Heart right ventricle (tissue), 16 donors: ENCODE measurements at regions of chr5 and their contacts with region 1.

Region 1: DNA sequence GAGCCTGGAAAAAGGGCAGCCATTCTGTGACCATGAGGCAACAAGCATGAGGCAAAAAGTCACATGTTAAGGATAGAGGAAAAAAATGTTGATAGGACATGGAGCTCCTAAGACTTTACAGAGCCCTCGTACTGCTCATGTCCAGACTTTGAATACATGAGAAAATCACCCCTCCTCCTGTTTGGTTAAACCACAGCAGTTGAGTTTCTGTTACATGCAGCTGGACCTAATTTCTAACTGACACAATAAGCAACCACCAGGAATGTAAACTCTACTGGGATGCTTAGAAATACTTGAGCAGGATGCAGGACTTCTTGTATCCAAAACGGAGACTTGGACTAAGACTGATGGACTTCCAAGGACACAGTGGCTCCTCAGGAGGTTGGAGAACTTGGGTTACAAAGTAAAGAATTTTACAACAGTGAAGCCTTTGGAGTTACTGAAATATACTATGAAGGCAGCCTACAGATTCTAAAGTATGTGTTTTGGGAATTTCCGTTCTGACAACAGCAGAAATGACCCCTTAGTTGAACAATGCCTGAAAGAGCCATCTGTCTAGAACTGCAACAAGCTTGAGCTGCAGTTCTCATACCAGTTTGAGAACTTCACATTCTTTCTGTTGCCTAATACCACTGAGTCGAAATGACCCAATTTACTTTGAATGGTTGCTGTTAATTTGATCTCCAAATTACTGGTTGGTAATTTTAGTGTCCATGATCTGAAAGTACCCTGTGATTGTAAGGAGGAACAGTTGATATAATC is 268.9 kb downstream of the PIK3R1 start:
- DNase-seq: no peak
- ATAC-seq: no peak
- H3K4me3 ChIP-seq: no peak overlapping the region
- H3K27ac ChIP-seq: no peak overlapping the region
- H3K4me1 ChIP-seq: peaks cover 0 to 11% (median 0%) of the 10 kb centered on the region in 9 donors
- H3K27me3 ChIP-seq: no peaks in the 10 kb centered on the region
- CTCF ChIP-seq: no peak

Region 2: GRCh38 chr5:67315082-67315989 is 1169.2 kb before region 1 on chr5:
- intact Hi-C with region 1: loop called in 1 of 10 experiments (anchors 10 kb)
- DNase-seq: no peak
- ATAC-seq: peak in 6 of 8 donors; percentile 21 to 58 (median 52)
- H3K4me3 ChIP-seq: no peak overlapping the region
- H3K27ac ChIP-seq: peak overlapping the region in 5 of 10 donors; percentile 9 to 74 (median 34)
- H3K4me1 ChIP-seq: peaks cover 0 to 13% (median 0%) of the 10 kb centered on the region in 9 donors
- H3K27me3 ChIP-seq: no peaks in the 10 kb centered on the region
- CTCF ChIP-seq: no peak

Region 3: GRCh38 chr5:68396722-68397121 is 87.8 kb before region 1 on chr5:
- intact Hi-C with region 1: no loop called
- DNase-seq: no peak
- ATAC-seq: no peak
- H3K4me3 ChIP-seq: no peak overlapping the region
- H3K27ac ChIP-seq: no peak overlapping the region
- H3K4me1 ChIP-seq: peaks cover 0 to 9% (median 0%) of the 10 kb centered on the region in 9 donors
- H3K27me3 ChIP-seq: no peaks in the 10 kb centered on the region
- CTCF ChIP-seq: no peak

Region 4: GRCh38 chr5:68631884-68632283 is 147.4 kb after region 1 on chr5:
- intact Hi-C with region 1: loop called in 1 of 10 experiments (anchors 5 kb)
- DNase-seq: no peak
- ATAC-seq: no peak
- H3K4me3 ChIP-seq: no peak overlapping the region
- H3K27ac ChIP-seq: no peak overlapping the region
- H3K4me1 ChIP-seq: no peaks in the 10 kb centered on the region
- H3K27me3 ChIP-seq: no peaks in the 10 kb centered on the region
- CTCF ChIP-seq: no peak